GM10248 (cell line): ENCODE measurements at regions of chr4 and their contacts with region 1.

Region 1: GRCh38 chr4:26171941-26172340 is 148.9 kb upstream of the RBPJ start:
- DNase-seq: no peak
- CTCF ChIP-seq: no peak

Region 2: GRCh38 chr4:26161030-26161824 is 10.7 kb before region 1 on chr4:
- CTCF ChIA-PET with region 1: interaction called, 12 read pairs
- POLR2A ChIA-PET with region 1: no interaction called
- DNase-seq: no peak
- CTCF ChIP-seq: peak; percentile 28